ENCODE measurements at regions of chr11 and their contacts with region 1.

Region 1: GRCh38 chr11:93359383-93359782 is 28.8 kb downstream of the DEUP1 start:
- DNase-seq: no peak
- CTCF ChIP-seq: no peak

Region 2: DNA sequence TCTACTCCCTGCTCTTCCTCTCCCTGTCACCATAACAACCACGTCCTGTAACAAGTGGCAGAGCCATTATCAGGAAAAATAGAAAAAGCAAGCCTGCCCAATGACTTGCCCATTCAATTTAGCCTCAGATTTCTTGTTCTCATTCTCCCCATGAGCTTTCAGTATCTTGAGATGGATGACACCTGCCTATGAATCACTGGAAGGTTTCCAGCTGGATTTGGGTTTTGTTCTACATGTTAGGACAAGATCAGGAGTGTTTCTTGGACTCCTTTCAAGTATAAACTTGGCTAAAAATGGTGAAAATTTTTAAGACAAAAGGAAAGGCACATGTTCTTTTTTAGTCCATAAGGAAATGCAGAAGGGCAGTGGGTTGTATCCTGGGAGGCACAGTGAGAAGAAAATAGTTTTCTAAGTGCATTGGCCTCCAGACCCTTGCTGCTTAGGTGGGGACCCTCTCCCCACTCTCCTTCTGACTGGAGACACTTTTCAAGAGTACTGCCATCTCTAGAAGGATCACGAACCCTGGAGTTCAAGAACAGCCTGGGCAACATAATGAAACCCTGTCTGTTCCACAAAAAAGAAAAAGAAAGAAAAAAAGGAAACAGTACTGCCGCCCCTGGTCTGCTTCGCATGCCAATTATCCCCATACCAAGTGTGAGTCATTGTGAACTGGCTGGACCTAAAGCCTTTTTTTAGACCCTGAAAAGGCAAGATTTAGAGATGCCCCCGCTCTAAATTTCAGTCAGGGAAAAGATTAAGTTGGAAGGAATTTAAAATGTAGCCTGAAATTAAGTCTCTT is 338.9 kb before region 1 on chr11:
- CTCF ChIA-PET with region 1: no interaction called
- POLR2A ChIA-PET with region 1: no interaction called
- DNase-seq: no peak
- CTCF ChIP-seq: no peak

Region 3: GRCh38 chr11:93348930-93349329 is 10.5 kb before region 1 on chr11:
- CTCF ChIA-PET with region 1: interaction called, 10 read pairs
- POLR2A ChIA-PET with region 1: no interaction called
- DNase-seq: no peak
- CTCF ChIP-seq: no peak